ENCODE measurements at regions of chr16 and their contacts with region 1.

Region 1: GRCh38 chr16:81403616-81404373 is 40.8 kb upstream of the CMIP start:
- DNase-seq: peak; percentile 96
- H3K4me3 Mint-ChIP-seq: peak overlapping the region; percentile 55
- H3K27ac Mint-ChIP-seq: peak overlapping the region; percentile 95
- H3K4me1 Mint-ChIP-seq: peaks cover 47% of the 10 kb centered on the region
- H3K27me3 Mint-ChIP-seq: no peaks in the 10 kb centered on the region
- CTCF ChIP-seq: peak; percentile 95

Region 2: DNA sequence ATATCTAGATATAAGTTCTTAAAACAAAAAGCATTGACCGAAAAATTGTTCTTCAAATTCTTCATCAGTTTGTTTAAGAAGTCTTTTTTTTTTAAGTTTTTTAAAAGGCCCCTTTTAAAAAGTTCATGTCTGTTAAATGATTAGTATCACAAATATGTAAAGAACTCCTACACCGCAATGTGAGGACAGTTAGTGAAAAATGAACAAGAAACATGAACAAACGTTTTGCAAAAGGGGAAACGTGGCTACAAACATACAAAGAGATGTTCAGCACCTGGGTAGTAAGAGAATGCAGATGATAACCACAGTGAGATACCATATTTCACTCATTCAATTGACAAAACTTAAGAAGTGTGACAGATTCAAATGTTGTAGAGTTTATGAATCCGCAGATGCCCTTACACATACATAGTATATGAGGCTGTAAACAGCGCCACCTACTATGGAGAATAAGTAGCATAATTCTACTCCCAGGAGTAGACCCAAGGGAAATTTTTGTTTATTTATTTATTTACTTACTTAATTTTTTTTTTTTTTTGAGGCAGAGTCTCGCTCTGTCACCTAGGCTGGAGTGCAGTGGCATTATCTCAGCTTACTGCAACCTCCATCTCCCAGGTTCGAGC is 53.7 kb before region 1 on chr16:
- CTCF ChIA-PET with region 1: no interaction called
- intact Hi-C with region 1: no loop called
- DNase-seq: no peak
- H3K4me3 Mint-ChIP-seq: no peak overlapping the region
- H3K27ac Mint-ChIP-seq: no peak overlapping the region
- H3K4me1 Mint-ChIP-seq: no peaks in the 10 kb centered on the region
- H3K27me3 Mint-ChIP-seq: no peaks in the 10 kb centered on the region
- CTCF ChIP-seq: no peak

Region 3: GRCh38 chr16:81360135-81360534 is 43.7 kb before region 1 on chr16:
- CTCF ChIA-PET with region 1: no interaction called
- intact Hi-C with region 1: no loop called
- DNase-seq: no peak
- H3K4me3 Mint-ChIP-seq: no peak overlapping the region
- H3K27ac Mint-ChIP-seq: no peak overlapping the region
- H3K4me1 Mint-ChIP-seq: no peaks in the 10 kb centered on the region
- H3K27me3 Mint-ChIP-seq: no peaks in the 10 kb centered on the region
- CTCF ChIP-seq: no peak

Region 4: DNA sequence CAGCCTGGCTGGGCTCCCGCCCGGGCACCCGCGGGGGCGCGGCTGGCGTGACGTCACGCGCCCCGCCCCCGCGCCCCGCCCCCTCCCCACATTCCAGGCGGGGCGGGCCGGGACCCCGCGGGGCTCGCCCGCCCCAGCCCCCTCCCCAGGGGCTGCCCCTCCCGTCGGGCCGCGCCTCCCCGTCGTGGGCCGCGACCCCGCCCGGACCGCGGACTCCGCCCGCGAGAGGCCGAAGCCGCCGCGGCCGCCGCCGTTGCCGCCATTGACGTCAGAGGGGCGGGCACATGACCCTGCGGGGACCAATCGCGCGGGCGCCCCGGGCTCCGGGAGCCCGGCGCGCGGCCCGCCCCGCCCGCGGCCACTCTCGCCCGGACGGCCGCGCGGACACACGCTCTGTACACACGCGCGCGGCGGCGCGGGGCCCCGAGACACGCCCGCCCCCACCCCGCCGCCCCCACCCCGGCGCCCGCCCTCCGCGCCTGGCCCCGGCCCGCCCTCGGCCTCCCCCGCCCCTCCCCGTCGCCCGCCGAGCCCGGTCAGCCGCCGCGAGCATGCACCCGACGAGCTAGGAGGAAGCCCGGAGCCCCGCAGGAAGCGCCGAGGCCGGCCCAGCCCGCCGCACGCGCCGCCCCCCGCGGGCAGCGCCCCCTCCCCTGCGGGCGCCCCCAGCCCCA is 40.8 kb after region 1 on chr16 and contains the start of gene CMIP:
- CTCF ChIA-PET with region 1: no interaction called
- intact Hi-C with region 1: loop called (anchors 2 kb)
- DNase-seq: peak; percentile 92
- H3K4me3 Mint-ChIP-seq: peak within 1 kb of the TSS; percentile 100
- H3K27ac Mint-ChIP-seq: peak within 1 kb of the TSS; percentile 99
- H3K4me1 Mint-ChIP-seq: peaks cover 56% of the 10 kb centered on the region
- H3K27me3 Mint-ChIP-seq: no peaks in the 10 kb centered on the region
- CTCF ChIP-seq: no peak
- total RNA-seq, gene CMIP: 79.9 and 82.7 TPM in 2 replicates

Region 5: GRCh38 chr16:81585785-81586184 is 182.0 kb after region 1 on chr16:
- CTCF ChIA-PET with region 1: no interaction called
- intact Hi-C with region 1: loop called (anchors 5 kb)
- DNase-seq: peak; percentile 45
- H3K4me3 Mint-ChIP-seq: peak overlapping the region; percentile 54
- H3K27ac Mint-ChIP-seq: peak overlapping the region; percentile 94
- H3K4me1 Mint-ChIP-seq: peaks cover 79% of the 10 kb centered on the region
- H3K27me3 Mint-ChIP-seq: no peaks in the 10 kb centered on the region
- CTCF ChIP-seq: peak; percentile 29

Region 6: GRCh38 chr16:81632392-81633146 is 228.8 kb after region 1 on chr16:
- CTCF ChIA-PET with region 1: no interaction called
- intact Hi-C with region 1: loop called (anchors 10 kb)
- DNase-seq: peak; percentile 83
- H3K4me3 Mint-ChIP-seq: peak overlapping the region; percentile 48
- H3K27ac Mint-ChIP-seq: peak overlapping the region; percentile 82
- H3K4me1 Mint-ChIP-seq: peaks cover 42% of the 10 kb centered on the region
- H3K27me3 Mint-ChIP-seq: no peaks in the 10 kb centered on the region
- CTCF ChIP-seq: no peak

Region 7: DNA sequence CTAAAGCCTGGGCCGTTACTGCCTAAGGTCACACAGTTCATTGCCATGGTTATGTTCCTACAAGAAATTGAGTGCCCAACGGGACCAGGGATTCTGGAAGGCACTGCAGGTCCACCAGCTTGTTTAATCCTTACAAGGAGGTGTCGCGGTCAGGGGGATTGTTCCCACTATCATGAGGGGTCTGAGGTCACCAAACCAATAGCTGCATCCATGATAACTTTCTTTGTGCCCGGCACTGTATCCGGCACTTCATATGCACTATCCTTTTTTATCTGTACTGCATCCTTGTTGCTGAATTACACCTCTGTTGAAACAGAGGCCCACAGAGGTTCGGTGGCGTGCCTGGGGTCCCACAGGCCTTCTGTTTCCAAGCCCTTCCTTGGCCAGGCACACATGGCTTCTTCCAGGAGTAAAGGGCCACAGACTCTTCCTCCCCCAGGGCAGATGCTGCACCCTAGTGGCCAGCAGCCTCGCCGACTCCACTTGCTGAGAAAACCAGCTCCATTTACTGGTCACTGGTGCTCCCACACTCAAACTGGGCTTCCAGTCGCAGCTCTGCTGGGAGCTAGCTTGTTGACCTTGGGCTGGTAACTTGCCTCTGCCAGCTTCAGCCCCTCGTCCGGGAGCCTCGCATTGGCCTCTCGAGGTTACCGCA is 293.3 kb after region 1 on chr16:
- CTCF ChIA-PET with region 1: interaction called, 11 read pairs
- intact Hi-C with region 1: no loop called
- DNase-seq: peak; percentile 79
- H3K4me3 Mint-ChIP-seq: no peak overlapping the region
- H3K27ac Mint-ChIP-seq: no peak overlapping the region
- H3K4me1 Mint-ChIP-seq: no peaks in the 10 kb centered on the region
- H3K27me3 Mint-ChIP-seq: no peaks in the 10 kb centered on the region
- CTCF ChIP-seq: peak; percentile 63

Region 8: DNA sequence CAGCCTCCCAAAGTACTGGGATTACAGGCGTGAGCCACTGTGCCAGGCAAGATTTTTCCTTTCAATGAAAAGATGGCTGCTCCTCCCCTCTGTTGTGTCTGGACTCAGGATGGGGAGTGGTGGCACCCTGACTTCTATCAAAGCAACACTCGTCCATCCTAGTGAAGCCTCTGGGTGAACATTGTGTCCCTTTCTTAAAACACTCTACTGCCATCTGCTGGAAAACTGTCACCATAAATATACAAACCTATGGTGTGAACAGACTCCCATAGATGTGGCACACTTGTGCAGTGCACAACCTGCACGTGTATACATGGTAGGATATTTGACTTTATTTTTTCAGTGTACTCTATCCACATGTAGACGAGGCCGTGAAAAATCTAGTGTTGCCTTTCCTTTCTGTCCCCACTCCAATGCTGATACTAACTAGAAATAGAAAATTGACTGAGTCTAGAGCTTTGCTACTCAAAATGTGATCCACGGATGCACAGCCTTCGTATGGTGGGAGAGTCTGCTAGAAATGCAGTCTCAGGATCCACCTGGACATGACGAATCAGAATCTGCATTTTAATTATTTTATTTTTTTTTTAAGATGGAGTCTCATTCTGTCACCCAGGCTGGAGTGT is 319.4 kb after region 1 on chr16:
- CTCF ChIA-PET with region 1: no interaction called
- intact Hi-C with region 1: loop called (anchors 1 kb)
- DNase-seq: peak; percentile 72
- H3K4me3 Mint-ChIP-seq: no peak overlapping the region
- H3K27ac Mint-ChIP-seq: no peak overlapping the region
- H3K4me1 Mint-ChIP-seq: no peaks in the 10 kb centered on the region
- H3K27me3 Mint-ChIP-seq: no peaks in the 10 kb centered on the region
- CTCF ChIP-seq: peak; percentile 66

Region 9: GRCh38 chr16:81737885-81738786 is 334.3 kb after region 1 on chr16:
- CTCF ChIA-PET with region 1: no interaction called
- intact Hi-C with region 1: loop called (anchors 1 kb)
- DNase-seq: peak; percentile 92
- H3K4me3 Mint-ChIP-seq: peak overlapping the region; percentile 53
- H3K27ac Mint-ChIP-seq: no peak overlapping the region
- H3K4me1 Mint-ChIP-seq: no peaks in the 10 kb centered on the region
- H3K27me3 Mint-ChIP-seq: peaks cover 9% of the 10 kb centered on the region
- CTCF ChIP-seq: peak; percentile 94